Heart right ventricle (tissue), 16 donors: ENCODE measurements at regions of chr17 and their contacts with region 1.

Region 1: GRCh38 chr17:30886187-30886586 is 19.9 kb downstream of the TEFM start:
- DNase-seq: no peak
- ATAC-seq: no peak
- H3K4me3 ChIP-seq: no peak overlapping the region
- H3K27ac ChIP-seq: no peak overlapping the region
- H3K4me1 ChIP-seq: no peaks in the 10 kb centered on the region
- H3K27me3 ChIP-seq: no peaks in the 10 kb centered on the region
- CTCF ChIP-seq: no peak

Region 2: GRCh38 chr17:31015639-31016038 is 129.5 kb after region 1 on chr17:
- intact Hi-C with region 1: no loop called
- DNase-seq: no peak
- ATAC-seq: peak in 1 of 8 donors; percentile 31
- H3K4me3 ChIP-seq: no peak overlapping the region
- H3K27ac ChIP-seq: no peak overlapping the region
- H3K4me1 ChIP-seq: peaks cover 0 to 14% (median 0%) of the 10 kb centered on the region in 9 donors
- H3K27me3 ChIP-seq: no peaks in the 10 kb centered on the region
- CTCF ChIP-seq: peak in 2 of 9 donors; percentile 29 to 34

Region 3: DNA sequence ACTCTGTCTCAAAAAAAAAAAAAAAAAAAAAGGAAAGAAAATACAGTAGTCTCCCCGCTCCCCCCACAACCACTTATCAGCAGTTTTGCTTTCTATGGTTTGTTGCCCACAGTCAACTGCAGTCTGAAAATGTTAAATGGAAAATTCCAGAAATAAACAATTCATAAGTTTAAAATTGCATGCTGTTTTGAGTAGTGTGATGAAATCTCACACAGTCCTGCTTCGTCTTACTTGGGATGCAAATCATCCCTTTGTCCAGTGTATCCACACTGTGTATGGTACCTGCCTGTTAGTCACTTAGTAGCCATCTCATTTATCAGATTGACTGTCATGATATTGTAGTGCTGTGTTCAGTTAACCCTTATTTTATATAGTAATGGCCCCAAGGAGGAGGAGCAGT is 250.1 kb after region 1 on chr17:
- intact Hi-C with region 1: loop called in 1 of 10 experiments (anchors 5 kb)
- DNase-seq: no peak
- ATAC-seq: no peak
- H3K4me3 ChIP-seq: no peak overlapping the region
- H3K27ac ChIP-seq: no peak overlapping the region
- H3K4me1 ChIP-seq: peaks cover 0 to 7% (median under 1%) of the 10 kb centered on the region in 9 donors
- H3K27me3 ChIP-seq: no peaks in the 10 kb centered on the region
- CTCF ChIP-seq: no peak